Thyroid gland (tissue), 4 donors: ENCODE measurements at regions of chr21 and their contacts with region 1.

Region 1: DNA sequence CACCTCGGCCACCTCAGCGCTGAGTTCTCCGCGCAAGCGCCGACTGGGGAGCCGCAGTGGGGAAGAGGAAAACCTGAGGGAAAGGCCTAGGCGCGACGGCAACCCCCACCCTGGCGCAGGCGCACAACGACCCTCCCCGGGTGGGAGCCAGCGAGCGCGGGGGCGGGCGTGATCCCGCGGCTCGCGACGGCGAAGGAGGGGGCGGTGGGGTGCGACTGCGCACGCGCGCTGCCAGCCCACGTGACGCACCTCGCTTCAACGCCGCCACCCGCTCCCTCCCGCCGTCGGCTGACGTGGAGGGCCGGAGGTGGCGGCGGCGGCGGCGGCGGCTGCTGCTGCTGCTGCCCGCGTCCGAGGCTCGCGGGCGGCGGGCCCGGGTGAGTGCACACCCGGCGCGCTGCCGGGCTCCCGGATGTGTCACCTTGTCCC is at the starts of genes PIGP and TTC3:
- DNase-seq: peak; percentile 94 to 96
- H3K4me3 ChIP-seq: peak within 1 kb of the TSS; percentile 69 to 89 (median 81)
- H3K27ac ChIP-seq: peak within 1 kb of the TSS; percentile 99
- H3K4me1 ChIP-seq: peaks cover 13 to 25% of the 10 kb centered on the region in 2 donors
- H3K27me3 ChIP-seq: no peaks in the 10 kb centered on the region
- CTCF ChIP-seq: no peak
- POLR2A ChIP-seq: peak; percentile 50 to 95
- total RNA-seq, gene PIGP: 14.7 to 27.0 (median 23.3) TPM
- total RNA-seq, gene TTC3: 206 to 286 (median 251) TPM

Region 2: DNA sequence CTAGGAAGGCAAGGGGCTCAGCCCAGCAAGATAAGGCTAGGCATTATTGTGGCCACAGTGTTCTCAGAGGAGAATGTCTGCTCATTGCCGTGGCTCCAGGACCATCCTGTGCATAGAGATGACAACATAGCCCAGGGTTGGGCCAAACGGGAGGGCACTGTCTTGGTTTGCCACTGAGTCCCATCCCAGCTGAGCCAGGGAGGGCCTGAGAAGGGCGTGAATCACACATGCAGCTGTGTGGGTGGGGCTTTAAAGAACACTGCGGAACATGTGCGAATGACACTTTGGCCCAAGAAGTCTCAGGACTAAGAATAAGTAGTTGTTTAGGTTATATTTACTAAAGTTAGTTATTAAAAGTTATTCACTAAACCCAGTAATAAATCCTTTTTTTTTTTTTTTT is 669.3 kb before region 1 on chr21:
- intact Hi-C with region 1: no loop called
- DNase-seq: no peak
- H3K4me3 ChIP-seq: no peak overlapping the region
- H3K27ac ChIP-seq: no peak overlapping the region
- H3K4me1 ChIP-seq: no peaks in the 10 kb centered on the region
- H3K27me3 ChIP-seq: no peaks in the 10 kb centered on the region
- CTCF ChIP-seq: no peak
- POLR2A ChIP-seq: no peak

Region 3: GRCh38 chr21:36989699-36990507 is 83.1 kb before region 1 on chr21:
- intact Hi-C with region 1: loop called (anchors 10 kb)
- DNase-seq: peak; percentile 95
- H3K4me3 ChIP-seq: peak overlapping the region in 2 of 3 donors; percentile 36 to 65
- H3K27ac ChIP-seq: peak overlapping the region; percentile 88 to 97 (median 96)
- H3K4me1 ChIP-seq: peaks cover 0 to 5% of the 10 kb centered on the region in 2 donors
- H3K27me3 ChIP-seq: no peaks in the 10 kb centered on the region
- CTCF ChIP-seq: peak; percentile 21 to 98 (median 82)
- POLR2A ChIP-seq: peak in 1 of 2 donors; percentile 57

Region 4: GRCh38 chr21:37267269-37268184 is 194.5 kb after region 1 on chr21 and contains the start of gene VPS26C:
- intact Hi-C with region 1: loop called (anchors 5 kb)
- DNase-seq: peak; percentile 99
- H3K4me3 ChIP-seq: peak within 1 kb of the TSS; percentile 50 to 99 (median 88)
- H3K27ac ChIP-seq: peak within 1 kb of the TSS; percentile 91 to 98 (median 97)
- H3K4me1 ChIP-seq: peaks cover 13 to 16% of the 10 kb centered on the region in 2 donors
- H3K27me3 ChIP-seq: no peaks in the 10 kb centered on the region
- CTCF ChIP-seq: no peak
- POLR2A ChIP-seq: peak; percentile 67 to 82
- total RNA-seq, gene VPS26C: 44.8 to 76.2 (median 62.0) TPM